WTC11 (cell line): ENCODE measurements at regions of chr16 and their contacts with region 1.

Region 1: DNA sequence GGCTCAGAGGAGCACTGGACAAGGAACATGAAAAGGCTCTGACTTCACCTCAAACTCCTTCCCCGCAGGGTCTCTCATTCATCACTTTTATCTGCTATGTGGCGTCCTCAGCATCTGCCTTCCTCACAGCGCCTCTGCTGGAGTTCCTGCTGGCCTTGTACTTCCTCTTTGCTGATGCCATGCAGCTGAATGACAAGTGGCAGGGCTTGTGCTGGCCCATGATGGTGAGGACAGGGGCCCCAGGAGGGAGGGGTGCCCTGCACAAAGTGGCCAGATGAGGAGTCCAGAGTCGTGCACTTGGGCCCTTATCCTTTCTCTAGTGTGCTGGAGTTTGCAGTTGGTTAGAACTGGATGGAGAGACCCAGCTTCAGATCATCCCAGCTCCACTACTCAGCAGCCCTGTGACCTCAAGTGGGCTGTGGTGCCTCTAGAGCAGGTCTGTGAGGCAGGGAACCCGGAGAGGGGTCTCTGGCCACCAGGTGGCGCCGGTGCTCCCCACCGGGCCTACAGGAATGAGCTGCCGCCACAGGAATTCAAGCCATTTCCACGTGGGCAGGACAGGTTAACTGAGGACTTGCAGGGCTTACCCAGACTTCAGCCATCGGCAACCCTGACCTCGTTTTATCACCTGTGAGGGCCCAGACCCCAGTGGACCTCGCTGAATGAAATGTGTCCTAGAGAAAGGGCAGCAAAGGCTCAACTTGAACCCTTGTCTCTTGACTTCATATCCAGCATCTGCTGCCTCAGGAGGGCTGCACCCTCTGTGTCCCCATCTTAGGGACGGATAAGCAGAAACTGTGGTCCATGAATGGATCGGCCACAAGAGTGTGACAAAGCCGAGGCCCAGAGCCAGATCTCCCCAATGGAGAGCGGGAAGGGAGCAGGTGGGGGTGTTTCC is 4.0 kb downstream of the CMTM3 start:
- DNase-seq: peak; percentile 94
- ATAC-seq: peak; percentile 54
- H3K4me3 Mint-ChIP-seq: no peak overlapping the region
- H3K27ac Mint-ChIP-seq: peak overlapping the region; percentile 84; the same call in 1 of the 2 replicates
- H3K4me1 Mint-ChIP-seq: peaks cover 26% of the 10 kb centered on the region
- H3K27me3 Mint-ChIP-seq: no peaks in the 10 kb centered on the region
- CTCF ChIP-seq: peak; percentile 75

Region 2: GRCh38 chr16:66515596-66516510 is 92.6 kb before region 1 on chr16:
- CTCF ChIA-PET with region 1: interaction called, 12 read pairs
- POLR2A ChIA-PET with region 1: no interaction called
- DNase-seq: peak; percentile 31
- ATAC-seq: peak; percentile 46
- H3K4me3 Mint-ChIP-seq: no peak overlapping the region
- H3K27ac Mint-ChIP-seq: peak overlapping the region; percentile 76
- H3K4me1 Mint-ChIP-seq: peaks cover 44% of the 10 kb centered on the region
- H3K27me3 Mint-ChIP-seq: no peaks in the 10 kb centered on the region
- CTCF ChIP-seq: 0 out of 2 replicates have a peak, but pooled peaks have one; percentile 17

Region 3: GRCh38 chr16:66596986-66597848 is 11.3 kb before region 1 on chr16:
- CTCF ChIA-PET with region 1: interaction called, 14 read pairs
- POLR2A ChIA-PET with region 1: no interaction called
- DNase-seq: no peak
- ATAC-seq: no peak
- H3K4me3 Mint-ChIP-seq: no peak overlapping the region
- H3K27ac Mint-ChIP-seq: no peak overlapping the region
- H3K4me1 Mint-ChIP-seq: no peaks in the 10 kb centered on the region; the same call in 1 of the 2 replicates
- H3K27me3 Mint-ChIP-seq: peaks cover 3% of the 10 kb centered on the region; the same call in 1 of the 2 replicates
- CTCF ChIP-seq: no peak

Region 4: DNA sequence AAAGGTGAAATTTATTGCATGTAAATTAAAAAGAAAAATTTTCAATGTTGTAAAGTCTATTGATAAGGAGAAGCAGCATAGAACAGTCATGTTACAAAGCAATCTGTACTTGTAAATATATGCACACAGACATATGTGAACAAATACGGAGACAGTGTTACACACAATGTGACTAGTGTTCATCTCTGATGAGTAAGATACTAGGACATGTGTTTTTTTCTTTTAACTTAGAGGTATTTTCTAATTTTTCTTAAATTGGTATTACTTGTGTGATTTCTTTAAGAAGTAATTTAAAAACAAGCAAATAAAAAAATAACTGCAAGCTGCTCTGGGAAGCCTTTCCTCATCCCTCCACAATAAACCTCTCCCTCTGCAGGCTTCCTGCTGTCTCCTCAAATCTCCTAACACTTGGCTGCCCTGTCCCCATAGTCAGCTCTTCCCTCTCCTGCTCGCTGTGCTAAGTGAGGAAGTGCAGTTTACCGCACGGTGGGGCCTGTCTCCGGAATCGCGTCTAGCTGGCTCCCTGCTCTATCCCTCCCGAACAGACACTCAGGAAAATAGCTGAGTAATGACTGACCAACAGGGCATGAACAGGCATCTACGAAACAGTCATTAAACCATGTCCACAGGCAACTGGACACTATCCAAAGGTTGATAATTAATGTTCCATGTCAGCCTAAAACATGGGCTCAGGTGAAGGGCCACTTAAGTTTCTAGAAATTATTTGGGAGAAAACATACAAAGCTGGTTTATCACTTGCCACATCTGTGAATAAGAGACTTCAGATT is 52.1 kb after region 1 on chr16:
- CTCF ChIA-PET with region 1: interaction called, 49 read pairs
- POLR2A ChIA-PET with region 1: no interaction called
- DNase-seq: peak; percentile 24
- ATAC-seq: peak; percentile 91
- H3K4me3 Mint-ChIP-seq: no peak overlapping the region
- H3K27ac Mint-ChIP-seq: peak overlapping the region; percentile 59
- H3K4me1 Mint-ChIP-seq: peaks cover 17% of the 10 kb centered on the region
- H3K27me3 Mint-ChIP-seq: no peaks in the 10 kb centered on the region
- CTCF ChIP-seq: no peak

Region 5: DNA sequence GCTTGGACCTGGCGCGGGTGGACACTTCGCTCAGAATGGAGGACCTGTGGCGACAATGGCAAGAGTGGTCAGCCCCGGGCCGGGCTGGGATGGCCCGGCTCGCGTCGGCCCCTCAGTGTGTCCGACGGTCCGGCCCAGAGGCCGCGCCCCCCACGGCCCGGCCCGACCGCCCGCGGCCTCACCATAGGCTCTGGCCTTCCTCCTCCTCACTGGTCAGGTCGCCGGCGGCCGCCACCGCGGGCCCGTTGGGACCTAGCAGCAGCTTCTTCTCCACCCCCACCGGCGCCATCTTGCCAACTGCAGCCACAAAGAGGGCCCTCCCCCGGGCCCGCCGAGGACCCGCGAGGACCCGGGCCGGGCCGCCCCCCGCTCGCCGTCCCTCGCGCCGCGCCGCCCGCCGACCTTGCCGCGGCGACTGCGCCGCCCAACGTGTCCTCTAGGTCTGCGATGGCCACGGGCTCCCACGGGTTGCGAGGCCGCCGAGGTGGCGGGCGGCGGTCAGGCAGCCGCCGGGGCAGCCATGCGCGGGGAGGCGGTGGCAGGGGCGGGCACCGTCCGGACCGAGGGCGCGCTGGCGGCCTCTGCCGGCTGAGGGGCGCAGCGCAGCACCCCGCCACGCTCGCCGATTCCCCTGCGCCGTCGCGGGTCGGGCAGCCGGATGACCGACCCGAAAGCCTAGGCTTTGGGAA is 143.0 kb after region 1 on chr16 and contains the start of gene DYNC1LI2:
- CTCF ChIA-PET with region 1: interaction called, 13 read pairs
- POLR2A ChIA-PET with region 1: no interaction called
- DNase-seq: peak; percentile 77
- ATAC-seq: peak; percentile 94
- H3K4me3 Mint-ChIP-seq: peak within 1 kb of the TSS; percentile 87
- H3K27ac Mint-ChIP-seq: peak within 1 kb of the TSS; percentile 81
- H3K4me1 Mint-ChIP-seq: peaks cover 25% of the 10 kb centered on the region
- H3K27me3 Mint-ChIP-seq: peaks cover 21% of the 10 kb centered on the region
- CTCF ChIP-seq: peak; percentile 74
- total RNA-seq, gene DYNC1LI2: 82.7 to 89.8 TPM (median 89.7 TPM) in 3 replicates